Heart left ventricle (tissue), 16 donors: ENCODE measurements at regions of chr11 and their contacts with region 1.

Region 1: DNA sequence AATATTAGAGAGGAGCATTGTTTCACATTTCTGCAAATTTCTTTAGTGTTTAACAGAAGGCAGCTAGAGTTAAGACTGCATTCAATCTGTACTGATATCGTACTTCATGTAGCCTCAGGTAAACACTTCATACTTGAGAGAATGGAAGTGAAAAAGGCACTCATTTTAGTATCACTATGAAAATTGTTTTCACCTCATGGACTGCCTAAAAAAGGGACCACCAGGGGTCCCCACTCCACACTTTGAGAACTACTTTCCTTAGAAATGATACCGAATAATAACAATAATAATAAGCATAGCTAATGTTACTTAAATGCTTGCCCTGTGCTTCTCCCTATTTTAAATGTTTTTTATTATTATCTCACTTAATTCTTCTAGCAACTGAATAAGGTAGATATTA is 95.1 kb downstream of the BLID start:
- DNase-seq: no peak
- ATAC-seq: no peak
- H3K4me3 ChIP-seq: no peak overlapping the region
- H3K27ac ChIP-seq: no peak overlapping the region
- H3K4me1 ChIP-seq: peaks cover 0 to 9% (median 0%) of the 10 kb centered on the region in 12 donors
- H3K27me3 ChIP-seq: no peaks in the 10 kb centered on the region
- CTCF ChIP-seq: peak; percentile 19 to 61 (median 44)
- POLR2A ChIP-seq: no peak

Region 2: GRCh38 chr11:121929581-121929980 is 91.3 kb before region 1 on chr11:
- intact Hi-C with region 1: no loop called
- DNase-seq: peak; percentile 28 to 58 (median 39)
- ATAC-seq: peak in 3 of 4 donors; percentile 57 to 70 (median 61)
- H3K4me3 ChIP-seq: peak overlapping the region in 11 of 12 donors; percentile 3 to 55 (median 39)
- H3K27ac ChIP-seq: peak overlapping the region in 6 of 12 donors; percentile 8 to 64 (median 44)
- H3K4me1 ChIP-seq: peaks cover 0 to 19% (median 8%) of the 10 kb centered on the region in 12 donors
- H3K27me3 ChIP-seq: no peaks in the 10 kb centered on the region
- CTCF ChIP-seq: no peak
- POLR2A ChIP-seq: no peak

Region 3: DNA sequence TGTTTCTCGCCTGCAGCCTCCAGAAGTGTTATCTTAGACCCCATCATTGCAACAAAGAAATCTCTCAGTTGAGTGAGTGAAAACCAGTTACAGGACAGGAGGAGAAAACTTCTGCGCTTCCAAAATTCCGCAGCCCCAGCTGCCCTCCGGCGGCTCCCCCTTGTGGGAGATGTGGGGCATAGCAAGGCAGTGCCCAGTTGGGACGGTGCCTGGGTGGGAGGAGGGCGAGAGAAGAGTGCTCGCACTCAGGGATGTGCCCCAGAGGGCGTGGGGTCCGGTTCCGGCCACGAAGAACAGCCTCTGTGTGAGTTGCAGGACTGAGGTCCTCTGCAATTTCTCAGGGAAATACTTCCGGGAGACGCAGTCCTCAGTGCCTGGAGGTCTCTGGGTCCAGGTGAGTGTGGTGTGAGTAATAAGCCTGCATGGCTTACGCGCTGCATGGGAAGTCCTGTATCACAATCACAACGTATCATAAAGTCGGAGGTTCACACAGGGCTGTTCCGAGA is 182.1 kb after region 1 on chr11:
- intact Hi-C with region 1: loop called (anchors 5 to 10 kb)
- DNase-seq: peak; percentile 63 to 84 (median 66)
- ATAC-seq: peak; percentile 65 to 89 (median 85)
- H3K4me3 ChIP-seq: peak overlapping the region in 10 of 12 donors; percentile 15 to 59 (median 40)
- H3K27ac ChIP-seq: peak overlapping the region in 6 of 12 donors; percentile 32 to 50 (median 44)
- H3K4me1 ChIP-seq: peaks cover 0 to 64% (median 27%) of the 10 kb centered on the region in 12 donors
- H3K27me3 ChIP-seq: no peaks in the 10 kb centered on the region
- CTCF ChIP-seq: peak; percentile 93 to 100 (median 97)
- POLR2A ChIP-seq: no peak

Region 4: DNA sequence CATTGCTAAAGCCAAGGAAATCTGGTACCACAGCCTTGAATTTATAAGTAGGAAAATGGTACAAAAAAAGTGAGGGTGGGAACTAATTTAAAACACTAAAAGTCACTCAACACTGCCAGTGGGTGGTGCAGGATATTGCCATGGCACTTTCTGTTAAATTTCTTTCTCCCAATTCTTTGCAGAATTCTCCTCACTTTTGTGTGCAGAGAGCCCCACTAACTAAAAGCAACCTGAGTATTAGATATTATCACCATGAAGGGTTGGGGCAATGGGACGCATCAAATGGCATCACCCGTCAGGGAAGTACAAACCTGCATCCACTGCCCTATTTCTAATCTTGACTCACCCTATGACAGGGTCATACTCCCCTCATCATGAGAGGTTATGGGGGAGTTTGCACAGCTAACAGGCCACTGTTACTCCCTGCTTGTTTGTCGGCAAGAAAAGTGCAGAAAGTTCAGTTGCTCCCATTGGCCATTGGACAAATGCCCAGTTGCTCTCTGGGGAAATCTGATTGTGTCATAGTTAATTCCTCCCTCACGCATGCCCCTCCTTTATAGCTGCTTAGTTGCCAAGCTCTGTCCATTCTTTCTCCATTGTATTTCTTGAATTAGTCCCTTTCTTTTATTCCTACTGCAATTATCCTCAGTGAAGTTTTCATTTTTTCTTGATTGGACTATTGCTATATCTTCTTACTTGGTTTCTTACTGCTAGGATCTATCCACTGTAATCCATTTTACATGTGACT is 188.9 kb after region 1 on chr11:
- intact Hi-C with region 1: loop called (anchors 5 to 10 kb)
- DNase-seq: peak in 4 of 5 donors; percentile 72 to 82 (median 79)
- ATAC-seq: peak; percentile 53 to 79 (median 69)
- H3K4me3 ChIP-seq: no peak overlapping the region
- H3K27ac ChIP-seq: peak overlapping the region in 10 of 12 donors; percentile 9 to 62 (median 32)
- H3K4me1 ChIP-seq: peaks cover 0 to 55% (median 34%) of the 10 kb centered on the region in 12 donors
- H3K27me3 ChIP-seq: no peaks in the 10 kb centered on the region
- CTCF ChIP-seq: no peak
- POLR2A ChIP-seq: no peak